ENCODE measurements at regions of chr16 and their contacts with region 1.

Region 1: DNA sequence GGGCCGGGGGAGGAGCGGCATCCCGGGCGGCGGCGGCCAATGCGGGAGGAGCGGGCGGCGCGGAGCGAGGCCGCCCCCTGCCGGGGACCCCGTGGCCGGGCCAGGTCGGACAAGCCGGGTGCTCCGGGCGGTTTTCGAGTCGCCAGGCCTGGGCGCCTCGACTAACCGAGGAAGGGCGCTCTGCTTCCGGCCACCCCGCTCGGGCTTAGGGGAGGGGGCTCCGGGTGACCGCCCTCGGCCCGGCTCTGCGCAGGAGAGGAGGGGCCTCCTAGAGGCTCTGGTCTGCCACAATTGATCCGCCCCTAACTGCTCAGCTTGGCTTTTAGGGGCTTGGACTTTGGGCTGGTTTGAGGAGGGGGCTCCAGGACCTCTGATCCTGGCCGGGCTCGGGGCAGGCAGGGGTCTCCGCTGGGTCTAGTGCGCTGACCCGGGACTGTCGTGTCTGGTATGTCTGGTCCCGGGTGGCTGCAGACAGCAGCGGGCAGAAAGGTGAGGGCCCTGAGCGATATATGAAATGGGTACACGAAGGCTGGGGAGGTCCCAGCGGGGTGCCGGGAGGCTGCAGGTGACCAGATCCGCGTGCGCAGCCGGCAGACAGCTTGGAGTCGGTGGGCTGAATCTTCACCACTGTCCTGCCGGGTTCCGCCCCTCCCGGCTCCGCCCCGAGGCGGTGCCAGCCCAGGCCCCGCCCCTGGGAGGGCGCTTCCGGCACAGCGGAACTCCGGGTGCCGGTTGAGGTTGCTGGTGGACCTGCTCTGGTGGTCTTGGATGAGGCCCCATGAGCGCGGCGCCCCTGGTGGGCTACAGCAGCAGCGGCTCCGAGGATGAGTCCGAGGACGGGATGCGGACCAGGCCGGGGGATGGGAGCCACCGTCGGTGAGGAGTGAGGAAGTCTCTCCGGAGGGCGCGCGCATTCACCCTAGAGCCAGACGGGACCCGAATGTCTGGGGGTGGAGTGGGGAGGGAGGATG is at the start of gene USB1:
- DNase-seq: peak; percentile 76 to 85
- H3K4me3 ChIP-seq: peak within 1 kb of the TSS; percentile 89
- H3K27ac ChIP-seq: no peak within 1 kb of the TSS
- H3K4me1 ChIP-seq: peaks cover 27% of the 10 kb centered on the region
- H3K27me3 ChIP-seq: no peaks in the 10 kb centered on the region
- CTCF ChIP-seq: peak; percentile 67
- total RNA-seq, gene USB1: 65.8 and 66.0 TPM in 2 replicates

Region 2: GRCh38 chr16:57576429-57576870 is 424.5 kb before region 1 on chr16:
- CTCF ChIA-PET with region 1: no interaction called
- POLR2A ChIA-PET with region 1: no interaction called
- intact Hi-C with region 1: loop called (anchors 1 kb)
- DNase-seq: peak; percentile 52 to 69
- H3K4me3 ChIP-seq: no peak overlapping the region
- H3K27ac ChIP-seq: no peak overlapping the region
- H3K4me1 ChIP-seq: no peaks in the 10 kb centered on the region
- H3K27me3 ChIP-seq: no peaks in the 10 kb centered on the region
- CTCF ChIP-seq: peak; percentile 95

Region 3: DNA sequence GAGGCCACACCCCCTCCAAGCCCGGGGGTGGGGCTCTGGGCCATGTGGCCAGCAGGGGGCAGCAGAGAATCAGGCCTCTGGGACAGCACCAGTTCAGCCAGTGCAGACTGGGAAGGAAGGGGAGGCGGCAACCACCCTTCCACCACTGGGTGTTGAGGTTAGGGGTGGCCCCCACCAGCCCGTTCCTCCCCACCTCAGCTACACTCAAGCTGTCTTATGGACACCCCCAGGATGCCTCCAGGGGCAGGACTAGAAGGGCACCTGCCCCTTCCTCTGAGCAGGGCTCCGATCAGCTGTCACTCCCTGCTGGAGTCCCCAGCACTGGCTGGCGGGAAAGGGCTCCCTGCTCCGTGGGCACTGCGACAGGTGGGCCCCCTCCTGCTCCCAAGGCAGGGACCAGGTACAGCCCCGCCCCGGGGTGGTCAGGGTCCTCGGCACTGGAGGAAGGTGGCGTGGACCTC is 243.6 kb before region 1 on chr16:
- CTCF ChIA-PET with region 1: no interaction called
- POLR2A ChIA-PET with region 1: no interaction called
- intact Hi-C with region 1: loop called (anchors 1 kb)
- DNase-seq: peak; percentile 59 to 91
- H3K4me3 ChIP-seq: no peak overlapping the region
- H3K27ac ChIP-seq: no peak overlapping the region
- H3K4me1 ChIP-seq: peaks cover 21% of the 10 kb centered on the region
- H3K27me3 ChIP-seq: no peaks in the 10 kb centered on the region
- CTCF ChIP-seq: peak; percentile 96

Region 4: DNA sequence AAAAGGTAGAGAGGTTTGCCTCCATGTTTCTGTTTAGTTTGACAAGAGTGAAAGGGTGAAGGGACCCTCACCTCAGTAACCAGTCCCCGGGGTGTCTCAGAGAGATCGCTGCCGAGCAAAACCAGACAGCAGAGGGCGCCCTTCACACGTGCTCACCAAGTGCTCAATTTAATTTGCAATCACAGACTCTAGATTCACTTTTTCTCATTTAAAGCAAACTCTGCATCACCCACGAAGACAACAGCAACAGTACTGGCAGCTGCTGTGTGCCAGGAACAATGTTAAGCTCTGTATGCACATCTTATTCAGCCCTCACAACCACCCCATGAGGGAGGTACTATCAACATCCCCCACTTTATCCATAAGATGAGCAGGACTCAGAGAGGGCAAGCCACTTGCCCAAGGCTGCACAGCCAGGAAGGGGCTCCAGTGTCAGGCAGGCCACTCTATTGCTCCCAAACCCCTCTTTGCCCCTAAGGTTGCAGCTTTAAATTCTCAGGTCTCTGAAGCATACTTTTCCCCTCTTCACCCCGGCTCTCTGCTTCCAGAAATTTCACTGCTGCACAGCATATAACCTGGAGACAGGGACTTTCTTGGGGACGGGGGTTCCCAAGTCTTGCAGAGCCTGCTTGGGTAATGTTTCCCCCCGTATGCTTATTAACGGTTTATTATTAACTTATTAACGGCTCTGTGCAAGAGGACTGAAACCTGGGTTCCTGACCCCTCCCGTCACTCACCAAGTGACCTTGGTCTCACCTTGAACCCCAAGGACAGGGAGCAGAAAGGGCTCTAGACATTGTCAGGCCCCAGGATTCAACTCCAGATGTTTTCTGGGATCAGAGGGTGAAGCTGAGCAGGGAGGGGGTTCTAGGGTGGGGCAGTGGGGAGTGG is 101.0 kb before region 1 on chr16:
- CTCF ChIA-PET with region 1: interaction called, 3 read pairs
- POLR2A ChIA-PET with region 1: no interaction called
- intact Hi-C with region 1: loop called (anchors 1 kb)
- DNase-seq: peak; percentile 63 to 77
- H3K4me3 ChIP-seq: no peak overlapping the region
- H3K27ac ChIP-seq: no peak overlapping the region
- H3K4me1 ChIP-seq: peaks cover 31% of the 10 kb centered on the region
- H3K27me3 ChIP-seq: no peaks in the 10 kb centered on the region
- CTCF ChIP-seq: peak; percentile 93

Region 5: GRCh38 chr16:58114827-58115825 is 114.1 kb after region 1 on chr16:
- CTCF ChIA-PET with region 1: no interaction called
- POLR2A ChIA-PET with region 1: no interaction called
- intact Hi-C with region 1: no loop called
- DNase-seq: no peak
- H3K4me3 ChIP-seq: no peak overlapping the region
- H3K27ac ChIP-seq: no peak overlapping the region
- H3K4me1 ChIP-seq: no peaks in the 10 kb centered on the region
- H3K27me3 ChIP-seq: no peaks in the 10 kb centered on the region
- CTCF ChIP-seq: no peak